ENCODE measurements at regions of chr3 and their contacts with region 1.

Region 1: GRCh38 chr3:48966876-48967361 is 23.1 kb upstream of the P4HTM start:
- DNase-seq: peak; percentile 83
- H3K4me3 Mint-ChIP-seq: no peak overlapping the region
- H3K27ac Mint-ChIP-seq: peak overlapping the region; percentile 82
- H3K4me1 Mint-ChIP-seq: peaks cover 20% of the 10 kb centered on the region
- H3K27me3 Mint-ChIP-seq: no peaks in the 10 kb centered on the region

Region 2: DNA sequence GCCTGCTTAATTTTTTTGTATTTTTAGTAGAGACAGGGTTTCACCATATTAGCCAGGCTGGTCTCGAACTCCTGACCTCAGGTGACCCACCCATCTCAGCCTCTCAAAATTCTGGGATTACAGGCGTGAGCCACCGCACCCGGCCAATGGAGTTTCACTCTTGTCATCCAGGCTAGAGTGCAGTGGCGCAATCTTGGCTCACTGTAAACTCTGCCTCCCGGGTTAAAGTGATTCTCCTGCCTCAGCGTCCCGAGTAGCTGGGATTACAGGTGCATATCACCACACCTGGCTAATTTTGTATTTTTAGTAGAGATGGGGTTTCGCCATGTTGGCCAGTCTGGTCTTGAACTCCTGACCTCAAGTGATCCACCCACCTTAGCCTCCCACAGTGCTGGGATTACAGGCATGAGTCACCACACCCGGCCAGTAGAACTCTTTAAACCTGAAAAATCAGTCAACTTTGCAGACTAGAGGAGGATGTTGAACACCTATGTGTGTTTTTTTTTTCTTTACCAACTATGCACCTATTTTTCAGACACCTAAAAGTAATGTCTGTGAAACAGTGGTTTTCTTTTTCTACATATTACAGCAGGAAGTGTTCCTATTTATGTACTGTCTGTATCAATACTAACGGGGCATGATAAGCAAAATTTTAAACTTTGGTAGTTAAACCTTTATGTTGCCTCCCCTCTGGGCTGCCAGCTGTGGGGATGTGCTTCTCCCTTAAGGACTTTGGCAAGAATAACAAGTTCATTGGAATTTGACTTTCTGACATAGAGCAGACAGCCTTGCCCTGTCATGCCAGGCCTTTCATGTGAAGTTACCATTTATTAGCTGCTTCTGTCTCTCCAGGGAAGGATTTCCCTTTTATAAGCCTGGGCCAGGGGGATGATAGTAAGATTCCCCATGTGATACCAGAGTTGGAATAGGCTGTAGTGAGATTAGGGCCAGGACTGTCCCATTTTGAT is 40.2 kb before region 1 on chr3:
- CTCF ChIA-PET with region 1: no interaction called
- POLR2A ChIA-PET with region 1: no interaction called
- intact Hi-C with region 1: loop called (anchors 5 kb)
- DNase-seq: peak; percentile 68
- H3K4me3 Mint-ChIP-seq: peak overlapping the region; percentile 43
- H3K27ac Mint-ChIP-seq: peak overlapping the region; percentile 88
- H3K4me1 Mint-ChIP-seq: peaks cover 63% of the 10 kb centered on the region
- H3K27me3 Mint-ChIP-seq: no peaks in the 10 kb centered on the region

Region 3: DNA sequence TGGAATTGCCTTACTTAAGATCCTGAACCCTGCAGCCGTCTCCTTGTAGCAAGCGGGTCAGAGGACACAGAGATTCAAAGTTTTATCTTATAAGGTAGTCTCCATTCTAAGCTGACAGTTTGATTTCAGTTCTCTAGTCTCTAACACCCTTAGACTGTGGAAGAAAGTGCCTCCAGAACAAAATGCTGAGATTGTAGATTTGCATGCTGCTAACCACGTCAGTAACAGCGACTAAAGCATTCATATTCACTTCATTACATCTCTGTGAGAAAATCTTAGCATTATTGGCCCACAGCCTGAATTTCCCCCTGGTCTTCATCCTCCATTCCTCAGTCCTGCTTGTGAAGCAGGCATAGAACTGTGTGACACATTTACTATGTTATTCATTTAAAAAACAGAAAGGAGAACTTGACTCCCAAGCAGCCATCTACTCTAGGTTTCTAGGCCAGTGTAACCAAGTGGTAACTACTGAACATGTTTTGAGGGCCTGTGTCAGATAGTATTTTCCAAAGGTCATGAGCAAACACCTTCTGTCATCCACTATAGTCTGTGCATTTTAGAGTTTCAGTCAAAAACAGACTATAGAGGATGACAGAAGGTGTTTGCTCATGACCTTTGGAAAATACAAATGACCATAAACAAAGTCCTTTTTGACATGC is 20.9 kb before region 1 on chr3:
- CTCF ChIA-PET with region 1: no interaction called
- POLR2A ChIA-PET with region 1: no interaction called
- intact Hi-C with region 1: no loop called
- DNase-seq: no peak
- H3K4me3 Mint-ChIP-seq: no peak overlapping the region
- H3K27ac Mint-ChIP-seq: peak overlapping the region; percentile 72
- H3K4me1 Mint-ChIP-seq: peaks cover 35% of the 10 kb centered on the region
- H3K27me3 Mint-ChIP-seq: no peaks in the 10 kb centered on the region

Region 4: GRCh38 chr3:49171119-49171774 is 204.3 kb after region 1 on chr3 and contains the start of gene KLHDC8B:
- CTCF ChIA-PET with region 1: no interaction called
- POLR2A ChIA-PET with region 1: no interaction called
- intact Hi-C with region 1: no loop called
- DNase-seq: peak; percentile 88
- H3K4me3 Mint-ChIP-seq: peak within 1 kb of the TSS; percentile 82
- H3K27ac Mint-ChIP-seq: no peak within 1 kb of the TSS
- H3K4me1 Mint-ChIP-seq: peaks cover 13% of the 10 kb centered on the region
- H3K27me3 Mint-ChIP-seq: no peaks in the 10 kb centered on the region
- total RNA-seq, gene KLHDC8B: 1.8 to 2.9 TPM

Region 5: DNA sequence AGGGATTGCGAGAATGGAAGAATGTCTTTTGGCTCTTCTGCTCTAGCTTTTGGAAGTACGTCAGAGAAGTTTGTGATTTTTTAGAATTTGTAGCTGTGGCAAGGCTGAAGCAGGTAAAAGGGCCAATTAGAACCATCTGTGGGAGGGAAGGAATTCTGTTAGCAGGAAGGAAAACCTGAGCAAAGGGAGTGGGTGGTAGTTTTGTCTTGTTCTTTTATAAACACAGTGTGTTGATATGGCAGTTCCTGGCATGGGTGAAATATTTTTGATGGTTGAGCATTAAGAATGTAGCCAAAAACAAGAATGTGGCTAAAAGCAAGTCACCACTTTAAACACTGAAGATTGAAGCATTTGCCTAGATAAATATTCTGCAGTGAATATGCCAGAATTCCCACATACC is 527.0 kb after region 1 on chr3:
- CTCF ChIA-PET with region 1: no interaction called
- POLR2A ChIA-PET with region 1: no interaction called
- intact Hi-C with region 1: no loop called
- DNase-seq: no peak
- H3K4me3 Mint-ChIP-seq: no peak overlapping the region
- H3K27ac Mint-ChIP-seq: no peak overlapping the region
- H3K4me1 Mint-ChIP-seq: peaks cover 4% of the 10 kb centered on the region
- H3K27me3 Mint-ChIP-seq: no peaks in the 10 kb centered on the region

Measured in activated CD4-positive, alpha-beta memory T cell treated with anti-CD3 and anti-CD28 coated beads for 36 hours (primary cell).